ENCODE measurements at regions of chr3 and their contacts with region 1.

Region 1: GRCh38 chr3:195909644-195910508 is 1.5 kb upstream of the TNK2 start:
- DNase-seq: peak; percentile 83
- H3K4me3 Mint-ChIP-seq: peak overlapping the region; percentile 72
- H3K27ac Mint-ChIP-seq: peak overlapping the region; percentile 55
- H3K4me1 Mint-ChIP-seq: peaks cover 37% of the 10 kb centered on the region
- H3K27me3 Mint-ChIP-seq: no peaks in the 10 kb centered on the region

Region 2: DNA sequence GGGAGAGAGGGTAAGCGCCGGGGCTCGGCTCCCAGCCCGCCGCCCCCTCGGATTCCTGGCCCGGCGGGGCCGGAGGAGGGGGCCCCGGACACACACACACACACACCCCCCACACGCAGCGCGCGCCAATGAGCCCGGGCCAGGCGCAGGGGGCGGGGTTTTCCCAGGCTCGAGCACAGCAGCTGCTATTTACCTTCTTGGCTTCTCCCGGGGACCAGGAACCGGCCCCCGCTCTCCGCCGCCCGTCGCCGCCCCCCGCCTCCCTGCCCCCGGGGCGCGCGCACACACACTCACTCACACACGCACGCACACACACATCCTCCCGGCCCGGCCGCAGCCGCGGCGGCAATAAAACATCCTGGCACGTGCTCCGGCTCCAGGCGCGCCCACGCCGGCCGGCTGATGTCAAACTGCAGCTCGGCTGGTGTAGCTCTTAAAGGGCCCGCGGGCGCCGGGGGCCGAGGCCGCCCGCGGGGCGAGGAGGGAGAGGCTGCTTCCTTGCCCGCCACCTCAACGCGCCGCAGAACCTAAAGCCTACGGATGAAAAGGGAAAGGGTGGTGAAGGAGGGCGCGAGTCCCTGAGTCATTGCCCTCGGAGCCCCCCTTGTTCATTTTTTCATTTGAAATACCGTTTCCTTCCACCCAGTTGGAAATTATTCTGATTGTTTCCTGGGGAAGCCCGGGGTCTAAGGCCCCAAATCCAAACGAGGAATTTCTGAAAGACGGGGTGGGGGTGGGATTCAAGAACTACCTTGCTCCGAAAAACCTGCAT is 1774.9 kb before region 1 on chr3:
- intact Hi-C with region 1: no loop called
- DNase-seq: peak; percentile 80
- H3K4me3 Mint-ChIP-seq: peak overlapping the region; percentile 84
- H3K27ac Mint-ChIP-seq: peak overlapping the region; percentile 90
- H3K4me1 Mint-ChIP-seq: peaks cover 82% of the 10 kb centered on the region
- H3K27me3 Mint-ChIP-seq: peaks cover 67% of the 10 kb centered on the region

Region 3: GRCh38 chr3:195442573-195443390 is 467.1 kb before region 1 on chr3 and contains the start of gene ACAP2:
- intact Hi-C with region 1: loop called (anchors 10 kb)
- DNase-seq: peak; percentile 99
- H3K4me3 Mint-ChIP-seq: peak within 1 kb of the TSS; percentile 92
- H3K27ac Mint-ChIP-seq: peak within 1 kb of the TSS; percentile 86
- H3K4me1 Mint-ChIP-seq: peaks cover 42% of the 10 kb centered on the region
- H3K27me3 Mint-ChIP-seq: no peaks in the 10 kb centered on the region
- total RNA-seq, gene ACAP2: 38.2 and 46.3 TPM in 2 replicates

Region 4: DNA sequence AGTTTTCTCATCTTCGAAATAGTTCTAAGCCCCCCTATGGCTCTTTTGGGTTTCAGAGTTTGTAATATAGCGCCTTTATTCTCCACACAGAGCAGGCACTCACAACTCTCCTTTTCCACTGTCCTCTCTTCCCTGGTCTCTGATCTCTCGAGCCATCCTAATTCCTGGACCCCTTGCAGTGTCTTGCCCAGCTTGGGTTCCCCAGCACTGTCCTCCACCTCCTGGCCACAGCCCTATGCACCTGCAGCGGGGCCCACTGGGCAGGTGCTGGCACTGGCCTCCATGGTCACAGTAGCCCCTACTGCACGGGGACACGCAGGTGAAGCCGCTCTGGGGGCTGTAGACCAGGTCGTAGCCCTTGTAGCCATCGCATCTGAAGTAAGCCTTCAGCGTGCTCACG is 161.2 kb before region 1 on chr3:
- intact Hi-C with region 1: loop called (anchors 5 kb)
- DNase-seq: no peak
- H3K4me3 Mint-ChIP-seq: peak overlapping the region; percentile 1
- H3K27ac Mint-ChIP-seq: peak overlapping the region; percentile 36
- H3K4me1 Mint-ChIP-seq: peaks cover 14% of the 10 kb centered on the region
- H3K27me3 Mint-ChIP-seq: peaks cover 2% of the 10 kb centered on the region

Region 5: GRCh38 chr3:195815169-195815771 is 94.6 kb before region 1 on chr3:
- intact Hi-C with region 1: no loop called
- DNase-seq: no peak
- H3K4me3 Mint-ChIP-seq: no peak overlapping the region
- H3K27ac Mint-ChIP-seq: no peak overlapping the region
- H3K4me1 Mint-ChIP-seq: no peaks in the 10 kb centered on the region
- H3K27me3 Mint-ChIP-seq: peaks cover 2% of the 10 kb centered on the region

Region 6: DNA sequence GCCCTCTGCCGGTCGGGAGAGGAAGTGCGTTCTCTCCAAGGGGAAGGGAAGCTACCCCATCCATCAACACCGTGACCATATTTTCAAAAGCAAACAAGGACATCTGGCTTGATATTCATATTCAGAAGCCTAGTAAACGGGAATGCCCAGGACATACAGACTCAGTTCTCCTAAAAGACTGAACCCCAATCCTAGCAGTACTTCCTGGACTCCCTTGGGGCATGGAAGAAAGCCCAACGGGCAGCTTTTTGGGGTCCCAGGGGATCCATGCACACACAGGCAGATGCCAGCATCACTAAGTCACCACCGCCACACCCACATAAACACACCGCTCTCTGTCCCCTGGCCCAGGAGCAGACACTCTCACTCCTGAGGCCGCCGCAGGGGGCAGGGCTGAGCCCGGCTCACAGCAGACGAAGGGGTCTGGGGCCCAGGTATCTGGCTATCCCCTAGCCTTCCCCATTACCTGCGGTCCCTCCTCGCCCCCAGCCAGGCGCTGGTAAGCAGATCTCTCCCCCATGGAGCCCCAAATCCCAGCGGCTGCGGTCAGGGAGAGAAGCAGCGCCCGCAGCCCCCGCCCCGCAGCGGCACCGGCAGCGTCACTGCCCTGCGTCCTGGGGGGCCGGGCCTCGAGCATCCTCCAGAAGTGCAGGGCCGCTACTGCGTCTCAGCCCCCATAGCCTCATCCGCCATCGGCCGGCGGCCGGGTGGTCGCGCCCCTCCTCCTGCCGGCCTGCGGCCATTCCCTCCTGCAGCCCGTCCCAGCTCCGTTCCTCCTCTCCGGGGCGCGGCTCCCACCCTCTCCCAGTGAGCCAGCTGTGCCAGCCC is 14.9 kb before region 1 on chr3:
- intact Hi-C with region 1: loop called (anchors 1 kb)
- DNase-seq: peak; percentile 61
- H3K4me3 Mint-ChIP-seq: peak overlapping the region; percentile 90
- H3K27ac Mint-ChIP-seq: peak overlapping the region; percentile 88
- H3K4me1 Mint-ChIP-seq: peaks cover 44% of the 10 kb centered on the region
- H3K27me3 Mint-ChIP-seq: no peaks in the 10 kb centered on the region

Region 7: DNA sequence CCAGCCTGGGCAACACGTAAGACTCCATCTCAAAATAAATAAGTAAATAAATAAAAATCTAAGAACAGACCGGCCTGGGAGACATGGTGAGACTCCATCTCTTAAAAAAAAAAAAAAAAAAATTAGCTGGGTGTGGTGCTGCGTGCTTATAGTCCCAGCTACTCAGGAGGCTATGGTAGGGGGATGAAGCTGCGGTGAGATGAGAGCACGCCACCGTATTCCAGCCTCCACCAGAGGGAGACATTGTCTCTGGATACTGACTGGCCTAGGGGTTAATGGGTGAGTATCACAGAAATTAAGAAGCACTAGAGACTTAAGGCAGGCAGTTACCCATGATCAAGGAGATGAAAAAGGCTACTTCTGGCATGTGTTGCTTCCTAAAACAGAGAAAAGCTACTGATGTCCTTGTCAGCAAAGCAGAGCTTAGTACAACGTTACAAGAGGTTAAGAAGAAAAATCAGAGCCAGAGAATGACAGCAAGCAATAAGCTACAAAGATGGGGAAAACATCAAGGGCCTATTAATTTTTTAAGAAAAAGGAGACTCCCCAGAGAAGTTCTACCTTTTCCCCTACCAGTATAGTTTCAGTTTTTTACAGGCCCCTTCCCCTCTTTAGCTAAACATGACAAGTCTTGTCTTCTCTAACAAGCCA is 163.4 kb after region 1 on chr3:
- intact Hi-C with region 1: no loop called
- DNase-seq: peak; percentile 60
- H3K4me3 Mint-ChIP-seq: peak overlapping the region; percentile 24
- H3K27ac Mint-ChIP-seq: peak overlapping the region; percentile 79
- H3K4me1 Mint-ChIP-seq: peaks cover 63% of the 10 kb centered on the region
- H3K27me3 Mint-ChIP-seq: no peaks in the 10 kb centered on the region

Region 8: GRCh38 chr3:196179380-196180308 is 269.8 kb after region 1 on chr3:
- intact Hi-C with region 1: loop called (anchors 5 kb)
- DNase-seq: peak; percentile 82
- H3K4me3 Mint-ChIP-seq: peak overlapping the region; percentile 74
- H3K27ac Mint-ChIP-seq: peak overlapping the region; percentile 97
- H3K4me1 Mint-ChIP-seq: peaks cover 61% of the 10 kb centered on the region
- H3K27me3 Mint-ChIP-seq: no peaks in the 10 kb centered on the region

Region 9: GRCh38 chr3:196357905-196358304 is 448.0 kb after region 1 on chr3:
- intact Hi-C with region 1: no loop called
- DNase-seq: no peak
- H3K4me3 Mint-ChIP-seq: no peak overlapping the region
- H3K27ac Mint-ChIP-seq: peak overlapping the region; percentile 47
- H3K4me1 Mint-ChIP-seq: peaks cover 15% of the 10 kb centered on the region
- H3K27me3 Mint-ChIP-seq: no peaks in the 10 kb centered on the region

Measured in activated T-helper 1 cell treated with anti-CD3 and anti-CD28 coated beads, Interleukin-12 subunit alpha, Interleukin-12 subunit beta, Interleukin-2, Interleukin-4 antibody, amounts not matched to agents 30 ng/mL and 10 ng/mL and 1 ng/mL, durations not matched to agents 14 hours and 24 hours and 36 hours (primary cell).